Lower leg skin (tissue), 4 donors: ENCODE measurements at regions of chr10 and their contacts with region 1.

Region 1: GRCh38 chr10:3239066-3239919 is 66.7 kb upstream of the PITRM1 start:
- DNase-seq: peak; percentile 66 to 96
- H3K4me3 ChIP-seq: no peak overlapping the region
- CTCF ChIP-seq: peak in 1 of 3 donors; percentile 78
- POLR2A ChIP-seq: no peak

Region 2: GRCh38 chr10:1420661-1421362 is 1818.5 kb before region 1 on chr10:
- intact Hi-C with region 1: no loop called
- DNase-seq: peak in 1 of 2 donors; percentile 23
- H3K4me3 ChIP-seq: no peak overlapping the region
- CTCF ChIP-seq: no peak
- POLR2A ChIP-seq: no peak

Region 3: GRCh38 chr10:3281941-3282673 is 42.8 kb after region 1 on chr10:
- intact Hi-C with region 1: no loop called
- DNase-seq: no peak
- H3K4me3 ChIP-seq: no peak overlapping the region
- CTCF ChIP-seq: no peak
- POLR2A ChIP-seq: no peak

Region 4: GRCh38 chr10:4663162-4663904 is 1424.0 kb after region 1 on chr10:
- intact Hi-C with region 1: loop called (anchors 10 kb)
- DNase-seq: peak; percentile 89 to 93
- H3K4me3 ChIP-seq: no peak overlapping the region
- CTCF ChIP-seq: no peak
- POLR2A ChIP-seq: no peak

Region 5: GRCh38 chr10:5211696-5212536 is 1972.6 kb after region 1 on chr10:
- intact Hi-C with region 1: no loop called
- DNase-seq: no peak
- H3K4me3 ChIP-seq: no peak overlapping the region
- CTCF ChIP-seq: no peak
- POLR2A ChIP-seq: no peak